ENCODE measurements at regions of chr9 and their contacts with region 1.

Region 1: DNA sequence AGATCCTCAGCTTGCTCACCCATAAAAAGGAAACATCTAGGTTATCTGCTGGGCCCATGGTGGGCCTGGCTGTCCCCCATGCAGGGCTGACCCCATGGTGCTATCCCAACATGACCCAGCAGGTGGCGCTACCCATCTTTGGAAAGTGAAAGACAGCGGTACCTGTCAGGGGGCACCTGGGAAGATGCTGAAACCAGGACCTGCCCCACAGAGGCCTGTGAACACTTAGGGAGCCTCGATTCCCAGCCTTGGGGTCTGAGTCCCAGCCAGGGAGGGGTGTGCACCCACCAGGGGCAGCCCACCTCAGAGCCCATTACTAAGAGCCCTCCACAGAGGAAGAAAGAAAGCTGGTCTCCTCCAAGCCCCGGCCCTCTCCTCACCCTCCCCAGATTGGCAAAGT is 46.6 kb upstream of the IPPK start:
- DNase-seq: peak; percentile 72 to 76
- ATAC-seq: peak; percentile 26 to 73 (median 54)
- H3K4me3 ChIP-seq: no peak overlapping the region
- H3K27ac ChIP-seq: peak overlapping the region in 7 of 10 donors; percentile 30 to 79 (median 57)
- H3K4me1 ChIP-seq: peaks cover 6 to 33% (median 22%) of the 10 kb centered on the region in 9 donors
- H3K27me3 ChIP-seq: no peaks in the 10 kb centered on the region
- CTCF ChIP-seq: peak; percentile 76 to 98 (median 94)

Region 2: GRCh38 chr9:92669890-92670708 is 46.5 kb before region 1 on chr9 and contains the start of gene IPPK:
- intact Hi-C with region 1: loop called in 3 of 10 experiments (anchors 5 kb)
- DNase-seq: peak; percentile 98
- ATAC-seq: peak; percentile 94 to 98 (median 97)
- H3K4me3 ChIP-seq: peak within 1 kb of the TSS; percentile 66 to 98 (median 81)
- H3K27ac ChIP-seq: peak within 1 kb of the TSS; percentile 72 to 98 (median 92)
- H3K4me1 ChIP-seq: peaks cover 4 to 52% (median 40%) of the 10 kb centered on the region in 9 donors
- H3K27me3 ChIP-seq: no peaks in the 10 kb centered on the region
- CTCF ChIP-seq: no peak
- total RNA-seq, gene IPPK: 6.5 to 17.8 (median 8.5) TPM

Measured in heart right ventricle (tissue), 16 donors.